ENCODE measurements at regions of chr4 and their contacts with region 1.

Region 1: DNA sequence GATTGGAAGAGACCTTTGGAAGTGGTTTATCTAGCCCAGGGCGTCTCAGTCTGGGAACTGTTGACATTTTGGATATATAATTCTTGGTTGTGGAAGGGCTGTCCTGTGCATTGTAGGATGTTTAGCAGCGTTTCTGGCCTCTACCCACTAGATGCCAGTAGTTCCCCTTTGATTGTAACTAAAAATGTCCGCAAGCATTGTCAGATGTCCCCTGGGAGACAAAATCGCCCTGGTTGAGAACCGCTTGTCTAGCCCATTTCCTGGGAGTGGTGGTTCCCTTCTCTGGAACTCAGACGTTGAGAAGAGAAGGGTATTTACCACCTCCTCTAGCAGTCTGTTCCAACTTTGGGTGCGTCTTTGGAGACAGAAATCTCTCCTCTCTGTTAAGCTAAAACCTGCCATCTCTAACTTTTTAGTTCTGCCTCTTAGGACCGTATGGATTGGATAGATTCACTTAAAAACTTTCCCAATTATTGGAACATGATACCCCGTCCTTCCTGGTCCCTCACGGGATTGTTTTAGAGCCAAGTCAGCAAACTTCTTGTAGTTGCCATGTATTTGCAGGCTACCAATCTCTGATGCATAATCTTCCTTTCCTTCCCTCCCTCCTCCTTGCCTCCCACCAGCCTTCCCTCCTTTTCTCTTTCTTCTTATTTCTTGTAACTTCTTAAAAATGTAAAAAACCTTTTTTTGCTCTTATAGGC is 13.9 kb downstream of the TMEM165 start:
- DNase-seq: no peak
- H3K4me3 ChIP-seq: no peak overlapping the region
- CTCF ChIP-seq: peak; percentile 6

Region 2: DNA sequence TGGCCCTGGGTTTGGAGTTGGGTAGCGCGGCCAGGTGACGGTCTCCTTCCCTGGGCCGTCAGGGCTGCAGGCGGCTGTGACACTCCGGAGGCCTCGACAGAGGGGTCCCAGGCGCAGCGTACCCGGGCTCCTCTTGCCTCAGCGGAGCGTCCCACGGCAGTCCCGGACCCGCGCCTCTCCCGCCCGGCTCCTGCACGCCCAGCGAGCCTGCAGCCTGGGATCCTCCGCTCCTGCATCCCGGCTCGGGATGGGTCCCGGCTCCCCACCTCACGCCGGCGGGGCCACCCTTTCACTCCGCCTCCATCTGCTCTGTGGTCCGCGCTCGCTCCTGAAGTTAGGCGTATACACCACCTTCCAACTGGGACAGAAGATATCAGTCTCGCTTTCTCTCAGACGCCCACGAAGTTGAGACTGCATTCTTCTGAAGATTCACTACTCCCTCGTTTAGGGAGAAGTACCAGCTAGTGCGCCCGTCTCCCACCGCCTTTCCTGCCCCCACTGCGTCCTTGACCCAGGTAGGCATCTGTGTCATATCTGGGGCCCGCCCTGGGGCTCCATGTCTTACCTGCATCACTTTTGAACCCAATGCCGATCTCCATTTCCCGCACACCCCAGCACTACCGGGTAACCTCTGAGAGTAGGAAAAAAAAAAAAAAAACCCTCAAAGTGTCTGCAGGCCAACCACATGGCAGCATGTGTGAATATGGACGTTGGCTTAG is 251.9 kb before region 1 on chr4:
- CTCF ChIA-PET with region 1: no interaction called
- POLR2A ChIA-PET with region 1: no interaction called
- DNase-seq: no peak
- H3K4me3 ChIP-seq: peak overlapping the region; percentile 23; the same call in 1 of the 2 replicates
- CTCF ChIP-seq: no peak

Region 3: DNA sequence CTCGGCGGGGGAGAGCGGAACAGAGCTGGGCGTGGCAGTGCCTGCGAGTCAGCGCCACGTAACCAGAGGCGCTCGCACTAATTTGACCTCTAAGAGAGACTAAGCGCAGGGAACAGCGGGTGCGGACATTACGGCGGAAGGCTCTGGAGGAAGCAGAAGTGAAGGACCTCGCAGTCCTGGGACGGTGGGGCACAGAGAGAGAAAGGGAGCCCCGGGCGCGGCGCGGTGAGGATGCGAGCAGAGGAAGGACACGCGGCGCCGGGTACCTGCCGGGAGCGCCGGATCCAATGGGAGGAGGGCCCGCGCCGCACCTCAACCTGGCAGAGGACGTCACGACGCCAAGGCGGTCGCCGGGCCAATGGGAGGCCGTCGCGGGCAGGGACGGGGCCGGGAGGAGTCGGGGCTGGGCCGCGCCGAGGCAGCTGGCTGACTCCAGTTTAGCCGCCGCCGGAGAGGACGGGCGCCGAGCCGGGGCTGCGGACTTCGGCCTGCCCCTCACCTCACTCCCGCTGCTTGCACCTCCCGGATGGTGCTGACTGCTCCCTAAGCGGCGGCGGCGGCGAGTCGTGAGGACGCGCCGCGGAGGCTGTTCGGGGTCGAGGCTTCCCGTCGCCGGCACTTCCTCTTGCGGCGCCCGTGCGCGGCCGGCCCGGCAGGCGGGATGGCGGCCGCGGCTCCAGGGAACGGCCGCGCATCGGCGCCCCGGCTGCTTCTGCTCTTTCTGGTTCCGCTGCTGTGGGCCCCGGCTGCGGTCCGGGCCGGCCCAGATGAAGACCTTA is 13.9 kb before region 1 on chr4 and contains the start of gene TMEM165:
- CTCF ChIA-PET with region 1: interaction called, 11 read pairs
- POLR2A ChIA-PET with region 1: interaction called, 5 read pairs
- DNase-seq: no peak
- H3K4me3 ChIP-seq: peak within 1 kb of the TSS; percentile 82
- CTCF ChIP-seq: no peak